ENCODE measurements at regions of chr3 and their contacts with region 1.

Region 1: DNA sequence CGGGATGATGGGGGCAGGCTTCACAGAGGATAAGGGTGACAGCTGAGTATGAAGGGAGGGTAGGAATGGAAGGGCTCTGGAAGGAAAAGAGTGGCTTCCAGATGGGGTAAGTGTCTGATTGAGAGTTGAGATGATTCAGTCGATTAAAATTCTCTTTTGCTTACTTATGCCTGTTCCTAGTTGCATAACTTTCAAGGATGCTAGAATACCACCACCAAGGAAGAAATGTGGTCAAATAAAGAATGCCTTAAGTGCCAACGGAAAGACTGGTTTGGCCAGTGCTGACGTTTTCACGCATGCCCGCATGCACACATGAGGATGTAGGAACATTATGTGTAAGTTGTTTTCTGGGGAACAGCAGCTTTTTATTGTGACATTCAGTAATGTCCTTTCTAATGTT is 263.4 kb upstream of the WNT5A start:
- DNase-seq: peak; percentile 67 to 76
- H3K4me3 ChIP-seq: no peak overlapping the region
- H3K27ac ChIP-seq: peak overlapping the region in 1 of 2 donors; percentile 3
- H3K4me1 ChIP-seq: no peaks in the 10 kb centered on the region
- H3K27me3 ChIP-seq: no peaks in the 10 kb centered on the region
- CTCF ChIP-seq: no peak
- POLR2A ChIP-seq: no peak

Region 2: DNA sequence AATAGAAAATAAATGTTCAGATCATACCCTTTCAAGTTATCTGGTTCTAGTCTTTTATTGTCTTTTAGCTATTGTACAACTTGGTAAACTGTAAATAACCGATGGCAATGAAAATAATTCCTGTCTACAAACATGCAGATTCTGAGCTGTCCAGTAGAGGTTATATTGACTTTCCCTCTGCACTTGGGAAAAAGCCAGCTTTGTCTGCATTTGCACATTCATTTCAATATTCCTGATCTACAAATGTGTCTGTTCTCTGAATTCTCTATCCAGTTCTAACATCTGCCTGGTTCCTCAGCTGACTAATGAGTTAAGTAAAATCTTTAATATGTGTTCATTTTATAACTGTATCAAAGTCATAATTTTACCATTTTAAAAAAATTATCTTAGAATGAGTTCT is 309.2 kb after region 1 on chr3:
- intact Hi-C with region 1: loop called (anchors 10 kb)
- DNase-seq: no peak
- H3K4me3 ChIP-seq: no peak overlapping the region
- H3K27ac ChIP-seq: no peak overlapping the region
- H3K4me1 ChIP-seq: no peaks in the 10 kb centered on the region
- H3K27me3 ChIP-seq: no peaks in the 10 kb centered on the region
- CTCF ChIP-seq: peak in 1 of 3 donors; percentile 16
- POLR2A ChIP-seq: no peak

Region 3: DNA sequence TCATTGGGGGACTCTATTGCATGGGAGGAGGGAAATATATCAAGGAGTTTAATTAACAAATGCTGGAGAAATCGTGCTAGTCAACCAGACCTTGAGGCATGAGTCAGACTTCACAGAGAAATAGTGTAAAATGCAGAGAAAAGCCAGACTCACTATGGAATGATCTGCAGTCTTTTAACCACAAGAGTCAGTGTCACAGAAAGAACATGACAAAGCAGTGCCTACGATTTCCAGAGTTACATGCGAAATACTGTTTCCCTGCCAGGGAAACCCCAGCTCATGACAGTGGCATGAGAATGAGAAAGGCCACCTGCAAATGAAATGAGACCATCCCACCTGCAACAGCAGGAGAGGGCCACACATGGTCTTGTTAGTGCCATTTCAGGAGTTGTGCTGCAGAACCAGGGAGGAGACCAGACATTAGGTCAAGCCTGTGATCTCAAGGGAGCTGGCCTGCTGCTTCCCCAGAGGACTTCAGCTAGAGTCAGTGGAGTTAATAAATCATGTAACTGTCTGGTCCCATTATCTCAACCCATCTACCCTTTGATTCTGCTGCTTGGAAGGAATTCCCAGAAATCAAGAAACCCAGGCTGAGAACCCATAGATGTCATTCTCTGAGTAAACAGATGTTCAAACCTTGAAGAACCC is 638.8 kb after region 1 on chr3:
- intact Hi-C with region 1: loop called (anchors 5 kb)
- DNase-seq: no peak
- H3K4me3 ChIP-seq: no peak overlapping the region
- H3K27ac ChIP-seq: no peak overlapping the region
- H3K4me1 ChIP-seq: no peaks in the 10 kb centered on the region
- H3K27me3 ChIP-seq: no peaks in the 10 kb centered on the region
- CTCF ChIP-seq: no peak
- POLR2A ChIP-seq: no peak

Measured in breast epithelium (tissue), 4 donors.